Sigmoid colon (tissue), 7 donors: ENCODE measurements at regions of chr7 and their contacts with region 1.

Region 1: GRCh38 chr7:127392566-127393367 is at the start of gene ZNF800:
- DNase-seq: peak; percentile 96
- H3K4me3 ChIP-seq: peak within 1 kb of the TSS; percentile 72 to 98 (median 96)
- H3K27ac ChIP-seq: peak within 1 kb of the TSS; percentile 95 to 97 (median 97)
- H3K4me1 ChIP-seq: peaks cover 0 to 26% (median 23%) of the 10 kb centered on the region in 4 donors
- H3K27me3 ChIP-seq: no peaks in the 10 kb centered on the region
- CTCF ChIP-seq: no peak
- EP300 ChIP-seq: no peak
- POLR2A ChIP-seq: peak; percentile 81 to 85
- total RNA-seq, gene ZNF800: 29.2 to 39.1 (median 36.0) TPM

Region 2: DNA sequence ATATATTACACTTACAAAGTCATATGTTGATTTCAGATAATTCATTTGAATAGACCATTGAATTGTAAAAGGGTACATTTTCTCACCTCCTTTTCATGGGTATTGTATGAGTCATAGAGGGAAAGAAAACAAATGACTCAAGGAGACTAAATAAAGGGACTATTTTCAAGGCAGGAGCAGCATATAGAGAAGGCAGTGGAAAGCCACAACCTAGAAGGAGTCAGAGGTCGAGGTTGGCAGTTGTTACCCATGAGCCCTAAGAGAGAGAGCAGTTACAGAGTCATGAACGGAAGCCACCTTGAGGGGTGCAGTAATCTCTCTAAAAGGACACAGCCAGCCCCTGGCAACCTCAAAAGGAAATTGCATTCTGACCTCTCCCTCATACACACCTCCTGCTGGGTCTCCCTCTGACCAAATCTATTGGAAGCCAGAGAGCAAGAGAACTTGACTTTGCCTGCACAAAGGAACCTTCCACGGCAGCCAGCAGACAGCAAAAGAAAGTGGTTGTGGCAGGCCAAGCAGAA is 278.0 kb before region 1 on chr7:
- intact Hi-C with region 1: no loop called
- DNase-seq: no peak
- H3K4me3 ChIP-seq: no peak overlapping the region
- H3K27ac ChIP-seq: no peak overlapping the region
- H3K4me1 ChIP-seq: no peaks in the 10 kb centered on the region
- H3K27me3 ChIP-seq: no peaks in the 10 kb centered on the region
- CTCF ChIP-seq: no peak
- EP300 ChIP-seq: no peak
- POLR2A ChIP-seq: no peak

Region 3: DNA sequence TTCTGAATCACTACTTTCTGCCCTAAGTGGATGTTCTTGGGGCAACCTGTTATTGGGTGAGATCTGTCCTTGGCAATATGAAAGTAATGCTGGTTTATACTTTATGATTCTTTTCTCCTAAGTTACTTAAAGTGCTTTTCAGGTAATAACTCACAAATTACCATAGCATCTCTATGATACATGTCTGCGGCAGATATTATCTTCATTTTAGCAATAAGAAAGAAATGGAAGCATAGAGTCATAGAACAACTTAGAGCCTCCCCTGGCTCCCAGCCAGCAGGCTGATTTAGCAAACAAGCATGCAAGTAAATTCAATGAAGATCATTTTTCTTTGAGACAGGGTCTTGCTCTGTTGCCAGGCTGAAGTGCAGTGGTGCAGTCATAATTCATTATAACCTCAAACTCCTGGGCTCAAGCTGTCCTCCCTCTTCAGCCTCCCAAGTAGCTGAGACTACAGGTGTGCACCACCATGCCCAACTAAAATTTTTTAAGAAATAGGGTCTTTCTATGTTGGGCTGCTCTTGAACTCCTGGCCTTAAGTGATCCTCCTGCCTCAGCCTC is 101.9 kb before region 1 on chr7:
- intact Hi-C with region 1: no loop called
- DNase-seq: no peak
- H3K4me3 ChIP-seq: no peak overlapping the region
- H3K27ac ChIP-seq: no peak overlapping the region
- H3K4me1 ChIP-seq: no peaks in the 10 kb centered on the region
- H3K27me3 ChIP-seq: peaks cover 0 to 3% (median 0%) of the 10 kb centered on the region in 3 donors
- CTCF ChIP-seq: no peak
- EP300 ChIP-seq: no peak
- POLR2A ChIP-seq: no peak

Region 4: DNA sequence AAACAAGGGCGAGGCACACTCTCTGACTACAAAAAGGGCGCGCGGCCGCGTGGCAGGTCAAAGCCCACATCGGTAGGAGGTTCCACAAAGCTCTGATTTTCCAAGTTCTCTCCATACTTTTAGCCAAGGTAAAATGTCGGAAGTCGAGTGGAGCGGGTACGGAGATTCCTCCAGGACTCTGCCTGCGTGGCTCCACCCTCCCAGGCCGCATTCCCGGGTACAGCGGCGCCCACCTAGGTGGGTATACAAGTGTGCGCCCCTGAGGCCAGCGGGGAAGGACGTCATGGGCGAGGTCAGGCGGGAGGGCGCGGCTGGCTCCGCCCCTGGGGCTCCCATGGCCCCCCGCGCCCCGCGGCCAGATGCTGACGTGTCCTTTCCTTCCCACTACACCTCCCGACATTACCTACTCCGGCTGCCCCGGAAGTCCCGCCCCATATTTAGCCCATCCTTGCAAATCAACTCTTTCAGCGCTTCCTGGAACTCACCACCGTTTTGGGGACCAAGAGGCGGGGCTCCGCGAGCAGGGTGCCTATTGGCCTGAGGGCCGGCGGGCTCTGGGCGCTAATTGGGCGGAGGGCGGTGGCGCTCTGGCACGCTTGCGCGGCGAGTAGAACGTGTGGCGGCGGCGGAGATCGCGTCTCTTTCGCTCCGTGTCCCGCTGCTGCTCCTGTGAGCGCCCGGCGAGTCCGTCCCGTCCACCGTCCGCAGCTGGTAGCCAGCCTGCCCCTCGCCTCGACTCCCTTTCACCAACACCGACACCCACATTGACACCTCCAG is 259.0 kb after region 1 on chr7 and contains the start of gene SND1:
- intact Hi-C with region 1: loop called (anchors 5 kb)
- DNase-seq: peak; percentile 100
- H3K4me3 ChIP-seq: peak within 1 kb of the TSS; percentile 56 to 93 (median 72)
- H3K27ac ChIP-seq: peak within 1 kb of the TSS; percentile 88 to 94 (median 92)
- H3K4me1 ChIP-seq: peaks cover 0 to 46% (median 32%) of the 10 kb centered on the region in 4 donors
- H3K27me3 ChIP-seq: no peaks in the 10 kb centered on the region
- CTCF ChIP-seq: no peak
- EP300 ChIP-seq: peak in 2 of 4 donors; percentile 6 to 30
- POLR2A ChIP-seq: peak; percentile 42 to 72
- total RNA-seq, gene SND1: 63.5 to 83.1 (median 74.2) TPM